SK-N-SH (cell line): ENCODE measurements at regions of chr2 and their contacts with region 1.

Region 1: DNA sequence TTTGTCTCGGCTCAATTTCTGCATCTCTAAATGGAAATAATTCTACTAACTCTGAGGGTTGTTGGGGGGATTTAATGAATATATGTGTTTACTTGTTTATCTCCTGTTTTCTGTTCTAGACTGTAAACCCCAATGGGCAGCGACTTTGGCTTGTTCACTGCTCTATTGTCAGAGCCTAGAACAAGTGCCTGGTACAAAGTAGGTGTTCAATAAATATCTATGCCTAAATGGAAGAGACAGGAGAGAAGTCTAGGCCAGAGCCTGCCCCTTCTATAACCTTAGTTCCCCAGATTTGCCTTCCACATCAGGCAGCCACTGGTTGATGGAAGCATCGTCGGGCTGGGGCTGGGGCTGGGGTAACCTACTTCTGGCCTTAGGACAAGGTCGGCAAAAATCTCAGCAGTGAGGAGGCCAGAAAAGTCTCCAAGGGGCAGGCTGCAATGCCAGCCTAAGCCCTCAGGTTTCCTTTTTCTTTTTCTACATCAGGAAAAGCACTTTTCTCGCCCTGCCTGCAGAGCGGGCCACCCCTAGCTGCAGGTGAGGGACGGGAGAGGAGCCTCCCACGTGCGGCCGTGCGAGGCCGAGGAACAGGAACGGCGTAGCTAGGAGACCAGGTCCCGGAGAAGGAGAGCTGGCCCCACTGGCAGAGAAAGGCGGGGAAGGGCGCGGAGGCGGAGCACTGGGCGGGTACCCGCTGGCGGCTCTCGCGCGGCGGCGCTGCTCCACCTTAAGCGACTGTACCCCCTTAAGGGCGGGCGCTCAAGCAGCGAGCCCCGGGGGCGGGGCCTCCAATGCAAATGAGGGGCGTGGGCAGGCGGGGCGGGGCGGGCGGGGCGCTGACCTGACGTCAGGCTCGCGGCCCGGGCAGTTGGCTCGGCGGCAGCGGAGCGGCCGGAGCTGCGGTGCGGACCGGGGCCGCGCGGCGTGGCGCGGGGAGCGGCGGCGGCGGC is at the start of gene CNNM4:
- DNase-seq: peak; percentile 97
- H3K4me3 ChIP-seq: peak within 1 kb of the TSS; percentile 61 to 74
- H3K27ac ChIP-seq: peak within 1 kb of the TSS; percentile 48 to 75; a peak in 3 of 4 replicates
- H3K4me1 ChIP-seq: peaks cover 16 to 38% of the 10 kb centered on the region in 2 experiments; a peak in 2 of 4 replicates
- H3K27me3 ChIP-seq: no peaks in the 10 kb centered on the region
- CTCF ChIP-seq: no peak
- EP300 ChIP-seq: no peak
- RAD21 ChIP-seq: no peak
- polyA plus RNA-seq, gene CNNM4: 5.5 TPM in 2 replicates

Region 2: GRCh38 chr2:96580771-96581170 is 179.5 kb before region 1 on chr2:
- CTCF ChIA-PET with region 1: no interaction called
- POLR2A ChIA-PET with region 1: no interaction called
- DNase-seq: peak; percentile 20
- H3K4me3 ChIP-seq: no peak overlapping the region
- H3K27ac ChIP-seq: no peak overlapping the region
- H3K4me1 ChIP-seq: no peaks in the 10 kb centered on the region
- H3K27me3 ChIP-seq: no peaks in the 10 kb centered on the region
- CTCF ChIP-seq: peak; percentile 32
- EP300 ChIP-seq: no peak
- RAD21 ChIP-seq: peak; percentile 12; the same call in 1 of the 2 replicates

Region 3: DNA sequence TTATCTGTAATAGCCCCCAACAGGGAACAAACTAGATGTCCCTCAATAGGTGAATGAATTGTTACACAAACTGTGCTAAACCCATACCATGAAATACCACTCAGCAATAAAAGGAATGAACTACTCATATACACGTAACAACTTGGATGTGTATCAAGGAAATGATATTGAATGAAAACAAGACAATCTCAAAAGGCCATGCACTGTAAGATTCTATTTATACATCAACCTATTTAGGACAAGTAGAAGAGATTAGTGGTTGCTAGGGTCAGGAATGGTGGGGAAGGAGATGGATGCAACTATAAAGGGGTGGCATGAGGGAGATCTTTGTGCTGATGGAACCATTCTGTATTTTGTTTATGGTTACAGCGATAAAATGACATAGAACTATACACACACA is 169.3 kb before region 1 on chr2:
- CTCF ChIA-PET with region 1: no interaction called
- POLR2A ChIA-PET with region 1: no interaction called
- DNase-seq: no peak
- H3K4me3 ChIP-seq: no peak overlapping the region
- H3K27ac ChIP-seq: no peak overlapping the region
- H3K4me1 ChIP-seq: no peaks in the 10 kb centered on the region
- H3K27me3 ChIP-seq: no peaks in the 10 kb centered on the region
- CTCF ChIP-seq: no peak
- EP300 ChIP-seq: no peak
- RAD21 ChIP-seq: no peak

Region 4: DNA sequence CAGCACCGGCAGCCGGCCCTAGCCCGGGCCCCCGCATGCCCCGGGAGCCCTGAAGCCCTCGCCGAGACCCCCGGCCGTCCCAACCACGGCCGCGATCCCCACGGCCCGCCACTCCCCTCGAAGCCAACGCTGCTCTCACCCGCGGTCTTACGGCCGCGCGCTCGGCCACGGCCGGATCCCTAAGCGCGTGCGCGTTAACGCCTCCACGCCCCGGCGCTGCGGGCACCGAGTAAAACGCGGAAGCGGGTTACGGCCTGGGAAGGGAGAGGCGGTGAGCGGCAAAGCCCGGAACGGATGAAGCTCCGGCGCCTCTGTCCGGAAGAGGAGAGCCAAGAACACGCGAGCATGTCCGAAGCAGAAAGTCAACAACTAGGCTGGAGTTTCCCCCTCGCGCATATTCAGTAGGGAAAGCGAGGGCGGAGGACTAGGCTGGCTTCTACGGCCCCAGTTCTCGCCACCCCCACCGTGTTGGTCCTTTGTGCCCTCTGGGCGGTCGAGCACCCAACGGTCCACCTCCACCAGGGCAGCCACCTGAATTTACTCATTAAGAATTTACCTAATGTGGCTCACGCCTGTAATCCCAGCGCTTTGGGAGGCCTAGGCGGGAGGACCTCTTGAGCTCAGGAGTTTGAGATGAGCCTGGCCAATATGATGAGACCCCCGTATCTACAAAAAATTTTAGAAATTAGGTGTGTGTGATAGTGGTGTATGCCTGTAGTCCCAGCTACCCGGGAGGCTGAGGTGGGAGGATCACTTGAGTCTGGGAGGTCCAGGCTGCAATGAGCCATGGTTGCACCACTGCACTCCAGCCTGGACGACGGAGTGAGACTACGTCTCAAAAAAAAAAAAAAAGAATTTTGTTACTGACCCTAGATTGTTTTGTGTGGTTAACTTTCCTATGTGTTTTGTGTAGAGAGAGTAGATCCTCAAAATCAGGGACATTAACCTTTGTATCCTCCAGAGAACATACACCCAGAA is 121.9 kb before region 1 on chr2 and contains the start of gene KANSL3:
- CTCF ChIA-PET with region 1: interaction called, 11 read pairs
- POLR2A ChIA-PET with region 1: interaction called, 6 read pairs
- DNase-seq: peak; percentile 93
- H3K4me3 ChIP-seq: peak within 1 kb of the TSS; percentile 63 to 96
- H3K27ac ChIP-seq: peak within 1 kb of the TSS; percentile 83 to 84
- H3K4me1 ChIP-seq: peaks cover 6 to 13% of the 10 kb centered on the region in 2 experiments; a peak in 2 of 4 replicates
- H3K27me3 ChIP-seq: no peaks in the 10 kb centered on the region
- CTCF ChIP-seq: no peak
- EP300 ChIP-seq: peak; percentile 39 to 49; a peak in 1 of 4 replicates
- RAD21 ChIP-seq: peak; percentile 19; the same call in 1 of the 2 replicates
- polyA plus RNA-seq, gene KANSL3: 10.1 and 10.7 TPM in 2 replicates

Region 5: DNA sequence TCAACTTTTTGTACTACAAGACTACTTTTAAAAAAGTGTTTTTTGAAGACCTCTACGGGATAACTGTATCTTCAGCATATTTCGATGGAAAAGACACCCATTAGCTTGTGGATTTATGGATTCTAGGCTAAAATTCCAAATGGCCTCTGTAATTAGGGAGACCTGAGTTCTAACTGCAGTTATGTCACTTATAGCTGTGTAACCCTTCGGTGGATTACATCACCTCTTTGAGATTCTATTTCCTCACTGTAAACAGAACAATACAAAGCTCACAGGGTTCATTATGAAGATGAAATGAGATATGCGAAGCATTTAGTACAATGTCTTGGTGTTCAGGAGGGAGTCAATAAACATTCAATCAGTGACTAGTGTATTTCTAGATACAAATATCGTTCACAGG is 44.7 kb before region 1 on chr2:
- CTCF ChIA-PET with region 1: no interaction called
- POLR2A ChIA-PET with region 1: no interaction called
- DNase-seq: no peak
- H3K4me3 ChIP-seq: no peak overlapping the region
- H3K27ac ChIP-seq: no peak overlapping the region
- H3K4me1 ChIP-seq: no peaks in the 10 kb centered on the region; a peak in 1 of 4 replicates
- H3K27me3 ChIP-seq: no peaks in the 10 kb centered on the region
- CTCF ChIP-seq: no peak
- EP300 ChIP-seq: no peak
- RAD21 ChIP-seq: no peak

Region 6: DNA sequence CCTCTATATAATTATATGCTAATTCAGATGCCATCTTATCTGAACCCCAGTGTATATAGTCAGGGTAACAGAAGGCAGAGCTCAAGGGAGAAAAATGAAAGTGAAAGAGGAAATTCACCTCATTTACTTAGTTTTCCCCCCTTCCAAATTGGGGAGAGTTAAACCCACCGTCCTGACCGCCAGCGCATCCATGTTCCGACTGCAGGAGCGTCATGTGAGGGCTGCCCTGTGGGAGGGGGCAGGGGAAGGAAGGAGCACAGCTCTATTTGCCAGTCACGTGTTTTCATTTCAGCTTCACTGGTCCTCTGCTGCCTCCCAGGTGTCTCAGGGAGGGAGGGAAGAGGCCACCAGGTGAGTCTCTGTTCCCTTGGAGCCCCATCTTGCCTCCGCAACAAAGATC is 13.6 kb after region 1 on chr2:
- CTCF ChIA-PET with region 1: interaction called, 32 read pairs
- POLR2A ChIA-PET with region 1: no interaction called
- DNase-seq: no peak
- H3K4me3 ChIP-seq: no peak overlapping the region
- H3K27ac ChIP-seq: no peak overlapping the region
- H3K4me1 ChIP-seq: peaks cover 0 to 15% of the 10 kb centered on the region in 2 experiments; a peak in 1 of 4 replicates
- H3K27me3 ChIP-seq: no peaks in the 10 kb centered on the region
- CTCF ChIP-seq: no peak
- EP300 ChIP-seq: no peak
- RAD21 ChIP-seq: no peak

Region 7: DNA sequence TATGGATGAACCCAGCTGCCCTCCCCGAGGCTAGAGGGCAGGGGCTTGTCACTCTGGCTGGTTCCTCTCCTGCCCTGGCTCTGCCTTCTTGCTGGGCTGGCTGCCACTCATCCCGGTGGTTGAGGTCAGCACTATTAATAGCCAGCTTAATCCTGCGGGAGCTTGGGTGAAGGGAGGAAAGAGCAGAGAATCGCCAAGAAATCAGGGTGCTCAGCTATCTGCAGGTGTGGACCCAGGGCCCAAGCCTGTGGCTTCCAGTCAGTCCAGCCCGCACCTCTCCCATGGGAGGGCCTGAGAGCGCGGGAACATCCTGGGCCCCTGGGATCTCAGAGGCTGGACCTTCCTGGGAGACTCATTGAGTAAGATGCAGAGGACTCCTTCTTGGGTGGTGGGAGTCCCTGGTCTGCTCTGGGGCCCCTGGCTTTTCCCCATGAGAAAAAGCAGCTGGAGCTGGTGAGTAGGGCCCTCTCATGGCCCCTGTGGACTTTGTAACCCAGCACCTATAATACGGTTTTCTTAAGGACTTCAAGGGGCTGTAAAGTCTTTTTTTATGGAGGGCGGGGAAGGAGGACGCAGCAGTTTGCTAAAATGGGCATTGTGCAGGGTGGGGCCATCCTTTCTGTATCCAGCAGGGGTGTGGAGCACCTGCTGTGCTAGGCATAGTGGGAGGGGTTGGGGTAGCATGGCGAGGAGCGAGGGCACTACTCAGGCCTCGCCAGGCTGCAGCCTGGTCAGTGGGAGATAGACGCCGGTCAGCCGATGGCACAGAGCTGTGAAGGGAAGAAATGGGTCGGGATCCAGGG is 28.3 kb after region 1 on chr2:
- CTCF ChIA-PET with region 1: interaction called, 58 read pairs
- POLR2A ChIA-PET with region 1: no interaction called
- DNase-seq: peak; percentile 80
- H3K4me3 ChIP-seq: no peak overlapping the region
- H3K27ac ChIP-seq: peak overlapping the region in 1 of 2 experiments; percentile 44; a peak in 2 of 4 replicates
- H3K4me1 ChIP-seq: peaks cover 11 to 16% of the 10 kb centered on the region in 2 experiments; a peak in 2 of 4 replicates
- H3K27me3 ChIP-seq: no peaks in the 10 kb centered on the region
- CTCF ChIP-seq: no peak
- EP300 ChIP-seq: no peak
- RAD21 ChIP-seq: no peak

Region 8: DNA sequence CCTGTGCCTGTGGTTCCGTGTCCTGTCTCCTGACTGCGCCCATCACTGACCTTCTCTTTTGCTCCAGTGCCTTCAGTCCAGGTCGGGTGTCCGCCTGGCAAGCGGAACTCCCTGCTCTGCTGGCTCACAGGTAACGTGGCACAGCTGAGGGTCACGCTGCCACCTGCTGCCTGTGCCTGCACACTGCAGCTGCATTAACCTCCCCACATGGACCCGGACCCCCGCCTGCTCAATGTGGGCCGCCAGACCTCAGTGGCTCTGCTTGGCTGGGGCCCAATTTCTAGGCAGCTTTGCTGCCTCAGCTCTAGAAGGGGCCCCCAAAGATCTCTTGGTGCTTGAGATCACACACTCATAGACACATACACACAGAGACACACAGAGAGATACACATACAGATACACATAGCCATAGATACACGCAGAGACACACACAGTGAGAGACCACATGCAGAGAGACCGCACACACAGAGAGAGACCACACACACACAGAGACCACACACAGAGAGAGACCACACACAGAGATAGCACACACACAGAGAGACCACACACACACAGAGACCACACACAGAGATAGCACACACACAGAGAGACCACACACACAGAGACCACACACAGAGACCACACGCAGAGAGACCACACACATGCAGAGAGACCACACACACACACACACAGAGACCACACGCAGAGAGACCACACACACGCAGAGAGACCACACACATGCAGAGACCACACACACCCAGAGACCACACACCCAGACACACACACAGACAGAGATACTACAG is 40.9 kb after region 1 on chr2:
- CTCF ChIA-PET with region 1: interaction called, 24 read pairs
- POLR2A ChIA-PET with region 1: interaction called, 5 read pairs
- DNase-seq: peak; percentile 93
- H3K4me3 ChIP-seq: peak overlapping the region in 1 of 2 experiments; percentile 40; a peak in 1 of 4 replicates
- H3K27ac ChIP-seq: peak overlapping the region in 1 of 2 experiments; percentile 4; a peak in 1 of 4 replicates
- H3K4me1 ChIP-seq: peaks cover 0 to 12% of the 10 kb centered on the region in 2 experiments; a peak in 1 of 4 replicates
- H3K27me3 ChIP-seq: no peaks in the 10 kb centered on the region
- CTCF ChIP-seq: peak; percentile 81
- EP300 ChIP-seq: no peak
- RAD21 ChIP-seq: peak; percentile 84

Region 9: DNA sequence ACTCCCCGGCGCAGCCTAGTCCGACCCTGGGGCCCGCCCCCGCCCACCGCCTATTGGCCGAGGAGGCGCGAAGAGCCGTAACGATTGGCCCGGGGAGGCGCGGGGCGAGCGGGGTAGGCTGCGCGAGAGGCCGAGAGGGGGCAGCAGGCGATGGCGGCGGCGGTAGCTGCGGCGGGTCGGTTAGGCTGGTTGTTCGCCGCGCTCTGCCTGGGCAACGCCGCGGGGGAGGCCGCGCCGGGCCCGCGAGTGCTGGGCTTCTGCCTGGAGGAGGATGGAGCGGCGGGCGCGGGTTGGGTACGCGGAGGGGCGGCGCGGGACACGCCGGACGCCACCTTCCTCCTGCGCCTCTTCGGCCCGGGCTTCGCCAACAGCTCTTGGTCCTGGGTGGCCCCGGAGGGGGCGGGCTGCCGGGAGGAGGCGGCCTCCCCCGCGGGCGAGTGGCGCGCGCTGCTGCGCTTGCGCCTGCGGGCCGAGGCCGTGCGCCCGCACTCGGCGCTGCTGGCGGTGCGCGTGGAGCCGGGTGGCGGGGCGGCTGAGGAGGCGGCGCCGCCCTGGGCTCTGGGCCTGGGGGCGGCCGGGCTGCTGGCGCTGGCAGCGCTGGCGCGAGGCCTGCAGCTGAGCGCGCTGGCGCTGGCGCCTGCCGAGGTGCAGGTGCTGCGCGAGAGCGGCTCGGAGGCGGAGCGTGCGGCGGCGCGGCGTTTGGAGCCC is 56.0 kb after region 1 on chr2 and contains the start of gene CNNM3:
- CTCF ChIA-PET with region 1: interaction called, 12 read pairs
- POLR2A ChIA-PET with region 1: no interaction called
- DNase-seq: peak; percentile 99
- H3K4me3 ChIP-seq: peak within 1 kb of the TSS; percentile 73 to 76
- H3K27ac ChIP-seq: peak within 1 kb of the TSS; percentile 39 to 91; a peak in 2 of 4 replicates
- H3K4me1 ChIP-seq: peaks cover 5 to 40% of the 10 kb centered on the region in 2 experiments; a peak in 3 of 4 replicates
- H3K27me3 ChIP-seq: no peaks in the 10 kb centered on the region
- CTCF ChIP-seq: peak; percentile 55
- EP300 ChIP-seq: peak in 1 of 2 experiments; percentile 6; a peak in 1 of 4 replicates
- RAD21 ChIP-seq: no peak
- polyA plus RNA-seq, gene CNNM3: 9.3 and 14.7 TPM in 2 replicates

Region 10: DNA sequence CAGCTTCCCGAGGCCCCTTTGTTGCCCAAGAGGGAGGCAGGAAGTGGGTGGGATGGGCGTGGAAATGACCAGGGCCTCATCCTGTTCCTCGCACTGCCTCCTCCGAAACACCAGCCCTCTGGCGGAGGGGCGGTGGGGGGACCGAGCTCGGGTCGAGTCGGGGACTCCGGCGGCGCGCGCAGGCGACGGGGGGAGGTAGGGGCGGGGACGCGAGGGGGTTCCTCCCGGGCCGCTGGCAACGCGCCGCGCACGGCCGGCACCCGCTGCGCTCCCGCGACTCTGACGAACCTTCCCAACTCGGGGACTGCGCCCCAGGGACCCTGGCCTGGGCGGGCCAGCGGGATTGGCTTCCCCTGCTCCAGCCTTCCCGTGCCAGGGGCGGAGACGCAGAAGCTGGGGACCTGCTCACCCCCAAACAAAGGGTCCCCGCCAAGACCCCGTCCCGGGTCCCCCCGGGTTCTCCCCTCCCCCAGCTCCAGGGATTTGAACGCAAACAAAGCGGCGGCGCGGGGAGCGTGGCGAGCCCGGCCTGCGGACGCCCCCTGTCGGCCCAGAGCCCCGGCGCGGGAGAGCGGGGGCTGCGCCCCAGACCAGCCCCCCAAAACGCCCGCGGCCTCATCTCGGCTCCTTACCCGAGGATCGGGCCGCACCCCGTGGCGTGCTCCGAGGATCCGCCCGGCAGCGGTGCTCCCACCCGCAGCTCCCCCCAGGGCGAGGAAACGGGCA is 108.4 kb after region 1 on chr2:
- CTCF ChIA-PET with region 1: no interaction called
- POLR2A ChIA-PET with region 1: no interaction called
- DNase-seq: peak; percentile 97
- H3K4me3 ChIP-seq: peak overlapping the region; percentile 94 to 95
- H3K27ac ChIP-seq: peak overlapping the region; percentile 83 to 92
- H3K4me1 ChIP-seq: peaks cover 9 to 29% of the 10 kb centered on the region in 2 experiments; a peak in 2 of 4 replicates
- H3K27me3 ChIP-seq: no peaks in the 10 kb centered on the region
- CTCF ChIP-seq: peak; percentile 76
- EP300 ChIP-seq: no peak
- RAD21 ChIP-seq: peak; percentile 19; the same call in 1 of the 2 replicates